Panc1 (cell line): ENCODE measurements at regions of chrX and their contacts with region 1.

Region 1: DNA sequence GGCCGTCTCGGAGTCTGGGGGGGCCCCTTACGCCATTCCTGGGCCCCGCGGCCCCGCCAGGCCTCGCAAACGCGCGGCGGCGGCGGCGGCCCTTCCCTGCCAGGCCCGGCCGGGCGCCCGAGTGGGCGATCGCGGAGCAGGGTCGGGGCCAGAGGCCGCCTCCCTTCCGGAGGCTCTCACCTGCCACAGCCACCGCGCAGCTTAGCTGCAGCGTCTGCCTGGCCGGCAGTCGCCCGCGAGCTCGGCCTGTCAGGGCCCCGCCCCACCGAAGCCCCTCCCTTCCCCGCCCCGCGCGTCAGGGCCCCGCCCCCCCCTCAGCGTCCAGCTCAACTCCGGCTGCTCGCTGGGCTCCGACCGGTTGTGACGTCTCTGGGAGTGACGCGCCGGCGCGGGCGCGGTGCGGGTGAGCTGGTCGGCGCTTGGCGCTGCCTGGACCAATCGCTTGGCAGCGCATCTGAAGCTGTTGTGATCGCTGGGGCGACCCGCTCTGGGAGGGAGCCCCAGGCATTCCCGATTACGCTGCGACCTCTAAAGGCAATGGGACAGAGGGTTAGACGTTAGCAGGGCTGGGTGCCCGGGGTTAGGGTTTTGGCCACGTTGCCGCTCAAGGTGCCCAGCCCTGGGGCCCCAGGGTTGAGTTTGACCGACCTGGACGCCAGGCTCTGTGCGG is at the start of gene SLC10A3:
- DNase-seq: peak; percentile 79
- ATAC-seq: peak; percentile 92
- H3K4me3 ChIP-seq: peak within 1 kb of the TSS; percentile 72 to 89
- H3K27ac ChIP-seq: peak within 1 kb of the TSS; percentile 89
- H3K4me1 ChIP-seq: peaks cover 18% of the 10 kb centered on the region
- H3K27me3 ChIP-seq: no peaks in the 10 kb centered on the region
- CTCF ChIP-seq: no peak
- total RNA-seq, gene SLC10A3: 64.1 TPM

Region 2: GRCh38 chrX:154428176-154429010 is 62.2 kb before region 1 on chrX and contains the start of gene ATP6AP1:
- CTCF ChIA-PET with region 1: interaction called, 10 read pairs
- POLR2A ChIA-PET with region 1: interaction called, 16 read pairs
- in situ Hi-C with region 1: no loop called
- intact Hi-C with region 1: no loop called
- DNase-seq: peak; percentile 68
- ATAC-seq: peak; percentile 99
- H3K4me3 ChIP-seq: peak within 1 kb of the TSS; percentile 67 to 68
- H3K27ac ChIP-seq: peak within 1 kb of the TSS; percentile 91
- H3K4me1 ChIP-seq: peaks cover 26% of the 10 kb centered on the region
- H3K27me3 ChIP-seq: no peaks in the 10 kb centered on the region
- CTCF ChIP-seq: no peak
- total RNA-seq, gene ATP6AP1: 221 TPM

Region 3: GRCh38 chrX:154526901-154527675 is 36.5 kb after region 1 on chrX:
- CTCF ChIA-PET with region 1: interaction called, 11 read pairs
- POLR2A ChIA-PET with region 1: interaction called, 4 read pairs
- in situ Hi-C with region 1: no loop called
- intact Hi-C with region 1: no loop called
- DNase-seq: no peak
- ATAC-seq: peak; percentile 87
- H3K4me3 ChIP-seq: peak overlapping the region; percentile 24 to 60
- H3K27ac ChIP-seq: peak overlapping the region; percentile 81
- H3K4me1 ChIP-seq: peaks cover 12% of the 10 kb centered on the region
- H3K27me3 ChIP-seq: no peaks in the 10 kb centered on the region
- CTCF ChIP-seq: no peak

Region 4: GRCh38 chrX:154734061-154734781 is 243.7 kb after region 1 on chrX:
- CTCF ChIA-PET with region 1: no interaction called
- POLR2A ChIA-PET with region 1: no interaction called
- in situ Hi-C with region 1: no loop called
- intact Hi-C with region 1: no loop called
- DNase-seq: no peak
- ATAC-seq: peak; percentile 39; the same call in 1 of the 2 replicates
- H3K4me3 ChIP-seq: peak overlapping the region; percentile 7 to 41; a peak in 3 of 4 replicates
- H3K27ac ChIP-seq: peak overlapping the region; percentile 89
- H3K4me1 ChIP-seq: peaks cover 93% of the 10 kb centered on the region
- H3K27me3 ChIP-seq: no peaks in the 10 kb centered on the region
- CTCF ChIP-seq: no peak